H1 (cell line): ENCODE measurements at regions of chr4 and their contacts with region 1.

Region 1: DNA sequence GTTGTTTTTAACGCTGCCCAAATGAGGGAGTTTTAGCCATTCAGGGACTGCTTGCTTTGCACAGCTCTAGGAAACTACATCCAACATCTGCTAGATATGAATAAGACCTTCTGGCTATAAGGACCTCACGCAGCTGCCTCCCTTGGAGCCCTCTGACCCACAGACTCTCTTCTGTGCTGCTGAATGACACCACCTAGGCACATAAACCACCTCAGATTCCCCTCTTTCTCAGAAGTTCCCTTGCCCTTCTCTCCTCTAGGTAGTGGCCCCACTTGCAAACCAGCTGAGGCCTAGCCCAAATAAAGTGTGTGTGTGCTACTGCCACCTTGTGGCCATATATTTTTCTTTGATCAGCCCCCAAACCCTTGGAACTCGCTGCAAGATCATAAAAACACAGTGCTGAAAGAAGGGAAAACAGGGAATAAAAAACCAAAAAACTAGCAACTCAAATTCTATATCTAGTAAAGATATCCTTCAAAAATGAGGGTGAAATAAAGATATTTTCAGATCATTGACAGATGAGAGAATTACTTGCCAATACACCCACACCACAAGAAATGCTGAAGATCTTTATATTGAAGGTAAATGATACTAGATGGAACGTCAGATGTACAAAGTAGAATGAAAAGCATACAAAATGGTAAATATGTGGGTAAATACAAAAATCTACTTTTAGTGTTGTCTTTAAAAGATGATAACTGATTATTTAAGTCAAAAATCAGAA is 265.9 kb downstream of the ADAMTS3 start:
- DNase-seq: peak in 1 of 2 experiments; percentile 68
- H3K4me3 ChIP-seq: no peak overlapping the region
- H3K27ac ChIP-seq: no peak overlapping the region
- H3K4me1 ChIP-seq: no peaks in the 10 kb centered on the region
- H3K27me3 ChIP-seq: peaks cover 0 to 2% (median 0%) of the 10 kb centered on the region in 4 experiments; a peak in 1 of 7 replicates
- CTCF ChIP-seq: peak; percentile 31 to 74 (median 73)
- EP300 ChIP-seq: no peak
- POLR2A ChIP-seq: no peak
- RAD21 ChIP-seq: peak; percentile 78 to 81

Region 2: GRCh38 chr4:72209600-72209999 is 93.5 kb before region 1 on chr4:
- CTCF ChIA-PET with region 1: no interaction called
- POLR2A ChIA-PET with region 1: no interaction called
- DNase-seq: no peak
- H3K4me3 ChIP-seq: no peak overlapping the region
- H3K27ac ChIP-seq: no peak overlapping the region
- H3K4me1 ChIP-seq: no peaks in the 10 kb centered on the region
- H3K27me3 ChIP-seq: no peaks in the 10 kb centered on the region
- CTCF ChIP-seq: no peak
- EP300 ChIP-seq: no peak
- POLR2A ChIP-seq: no peak
- RAD21 ChIP-seq: no peak

Region 3: DNA sequence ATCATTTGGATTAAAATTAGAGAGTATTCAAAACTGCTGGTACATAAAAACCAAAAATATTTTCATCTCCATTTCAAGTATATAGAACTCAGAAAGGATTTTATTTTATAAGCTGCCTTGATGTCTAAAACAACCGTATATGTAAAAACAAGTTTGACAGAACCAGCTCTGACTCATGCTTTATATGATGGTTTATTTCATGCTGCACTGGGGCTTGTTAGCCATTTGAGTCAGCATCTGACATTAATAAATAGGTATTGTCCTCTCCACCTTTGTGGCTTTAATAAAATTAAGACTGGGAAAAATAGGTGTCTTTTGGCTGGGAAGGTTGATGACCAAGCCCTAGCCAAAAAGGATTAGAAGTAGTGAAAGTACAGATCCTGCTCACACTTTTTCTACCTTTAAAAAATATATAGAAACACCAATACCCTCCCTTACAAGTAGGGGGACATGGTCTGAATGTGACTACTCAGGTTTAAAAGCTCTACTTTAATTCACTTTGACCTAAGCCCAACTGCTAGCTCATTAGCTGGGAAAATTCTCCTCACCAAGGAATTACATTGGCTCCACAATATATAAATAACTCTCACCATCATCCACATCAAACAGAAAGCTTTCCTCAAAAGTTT is 37.8 kb after region 1 on chr4:
- CTCF ChIA-PET with region 1: interaction called, 10 read pairs
- POLR2A ChIA-PET with region 1: no interaction called
- DNase-seq: no peak
- H3K4me3 ChIP-seq: no peak overlapping the region
- H3K27ac ChIP-seq: no peak overlapping the region
- H3K4me1 ChIP-seq: no peaks in the 10 kb centered on the region
- H3K27me3 ChIP-seq: no peaks in the 10 kb centered on the region
- CTCF ChIP-seq: no peak
- EP300 ChIP-seq: no peak
- POLR2A ChIP-seq: no peak
- RAD21 ChIP-seq: no peak